K562 (cell line): ENCODE measurements at regions of chr13 and their contacts with region 1.

Region 1: DNA sequence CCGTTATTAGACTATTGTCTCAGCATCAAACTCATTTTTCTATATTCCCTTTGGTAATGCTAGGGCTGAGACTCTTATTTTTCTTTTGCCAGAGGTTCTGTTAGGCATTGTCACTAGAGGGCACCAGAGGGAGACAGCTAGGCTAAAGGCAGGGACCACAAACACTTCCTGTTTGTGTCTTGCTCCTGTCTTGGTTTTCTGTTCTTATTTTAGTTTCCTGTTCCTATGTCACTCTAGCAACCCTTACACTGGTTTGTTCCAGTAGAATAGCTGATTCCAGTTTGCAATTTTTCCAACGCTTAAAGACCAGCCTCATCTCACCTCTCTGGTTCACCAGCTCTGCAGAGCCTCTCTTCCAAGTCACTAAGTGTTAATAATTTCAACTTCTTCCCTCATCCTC is 772.0 kb downstream of the DIAPH3 start:
- DNase-seq: peak; percentile 7 to 64 (median 22)
- ATAC-seq: peak; percentile 83
- H3K4me3 ChIP-seq: no peak overlapping the region
- H3K27ac ChIP-seq: no peak overlapping the region
- H3K4me1 ChIP-seq: no peaks in the 10 kb centered on the region
- H3K27me3 ChIP-seq: no peaks in the 10 kb centered on the region
- CTCF ChIP-seq: peak; percentile 60 to 66 (median 61)
- EP300 ChIP-seq: no peak
- POLR2A ChIP-seq: no peak
- RAD21 ChIP-seq: peak; percentile 68 to 72

Region 2: DNA sequence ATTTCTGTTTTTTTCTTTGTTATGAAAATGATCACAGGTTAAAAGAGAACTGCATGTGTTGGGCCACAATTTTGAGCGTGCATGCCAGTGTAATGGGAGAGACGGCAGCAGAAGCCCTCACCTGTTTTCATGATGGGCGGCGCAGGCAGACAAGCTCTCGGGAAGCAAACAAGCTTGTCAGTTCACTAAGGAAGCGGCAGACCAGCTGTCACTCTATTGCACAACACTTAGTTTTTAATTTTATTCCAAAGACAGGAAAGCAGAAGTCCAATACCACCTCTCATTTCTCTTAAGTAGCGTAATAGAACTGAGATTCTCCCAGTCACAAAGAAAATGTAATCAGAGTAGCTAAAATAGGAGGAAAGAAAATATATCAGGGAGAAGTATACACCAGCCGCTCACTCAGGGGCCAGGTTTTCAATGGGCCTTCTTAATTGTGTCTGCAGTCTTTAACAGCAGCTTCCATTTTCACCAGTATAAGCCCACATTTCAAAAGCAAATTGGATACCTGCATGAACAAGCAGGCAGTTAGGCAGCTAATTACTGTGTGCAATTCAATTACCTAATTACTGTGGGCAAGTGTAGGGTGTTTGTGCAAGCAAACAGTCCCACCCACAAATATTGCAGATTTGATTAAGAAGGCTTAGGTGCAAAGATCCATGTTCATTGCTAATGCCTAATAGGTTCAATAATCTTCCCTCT is 60.6 kb after region 1 on chr13:
- CTCF ChIA-PET with region 1: no interaction called
- POLR2A ChIA-PET with region 1: no interaction called
- in situ Hi-C with region 1: no loop called
- intact Hi-C with region 1: no loop called
- DNase-seq: no peak
- ATAC-seq: no peak
- H3K4me3 ChIP-seq: no peak overlapping the region
- H3K27ac ChIP-seq: no peak overlapping the region
- H3K4me1 ChIP-seq: no peaks in the 10 kb centered on the region
- H3K27me3 ChIP-seq: no peaks in the 10 kb centered on the region; a peak in 2 of 5 replicates
- CTCF ChIP-seq: no peak
- EP300 ChIP-seq: no peak
- POLR2A ChIP-seq: no peak
- RAD21 ChIP-seq: no peak

Region 3: DNA sequence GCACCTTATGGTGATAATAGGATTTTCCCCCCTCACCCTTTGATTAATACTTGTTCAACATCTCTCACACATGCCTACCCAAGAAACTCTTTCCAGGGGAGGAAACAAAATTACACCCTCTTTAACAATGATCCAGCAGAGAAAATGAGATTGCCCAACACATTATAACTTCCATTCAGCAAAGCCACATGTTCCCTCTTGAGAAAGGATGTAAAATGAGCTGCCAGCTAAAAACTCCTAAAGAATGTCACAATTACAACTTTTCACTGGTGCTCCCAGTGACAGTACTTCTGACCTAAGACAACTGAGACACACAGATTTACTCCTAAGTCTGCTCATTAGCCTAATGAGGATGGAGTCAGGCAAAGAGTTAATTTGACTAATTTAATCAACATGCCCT is 150.6 kb after region 1 on chr13:
- CTCF ChIA-PET with region 1: no interaction called
- POLR2A ChIA-PET with region 1: no interaction called
- in situ Hi-C with region 1: no loop called
- intact Hi-C with region 1: loop called (anchors 10 kb)
- DNase-seq: no peak
- ATAC-seq: no peak
- H3K4me3 ChIP-seq: no peak overlapping the region
- H3K27ac ChIP-seq: no peak overlapping the region
- H3K4me1 ChIP-seq: no peaks in the 10 kb centered on the region; a peak in 1 of 5 replicates
- H3K27me3 ChIP-seq: no peaks in the 10 kb centered on the region
- CTCF ChIP-seq: no peak
- EP300 ChIP-seq: no peak
- POLR2A ChIP-seq: no peak
- RAD21 ChIP-seq: no peak

Region 4: GRCh38 chr13:59906413-59907049 is 514.8 kb after region 1 on chr13:
- CTCF ChIA-PET with region 1: no interaction called
- POLR2A ChIA-PET with region 1: no interaction called
- in situ Hi-C with region 1: no loop called
- intact Hi-C with region 1: loop called (anchors 10 kb)
- DNase-seq: peak in 2 of 4 experiments; percentile 2 to 19
- ATAC-seq: 0 out of 3 replicates have a peak, but pooled peaks have one; percentile 57
- H3K4me3 ChIP-seq: no peak overlapping the region
- H3K27ac ChIP-seq: no peak overlapping the region
- H3K4me1 ChIP-seq: no peaks in the 10 kb centered on the region; a peak in 1 of 5 replicates
- H3K27me3 ChIP-seq: no peaks in the 10 kb centered on the region
- CTCF ChIP-seq: peak; percentile 18 to 50 (median 39); a peak in 4 of 6 replicates
- EP300 ChIP-seq: no peak
- POLR2A ChIP-seq: no peak
- RAD21 ChIP-seq: peak; percentile 34 to 35; a peak in 3 of 4 replicates

Region 5: DNA sequence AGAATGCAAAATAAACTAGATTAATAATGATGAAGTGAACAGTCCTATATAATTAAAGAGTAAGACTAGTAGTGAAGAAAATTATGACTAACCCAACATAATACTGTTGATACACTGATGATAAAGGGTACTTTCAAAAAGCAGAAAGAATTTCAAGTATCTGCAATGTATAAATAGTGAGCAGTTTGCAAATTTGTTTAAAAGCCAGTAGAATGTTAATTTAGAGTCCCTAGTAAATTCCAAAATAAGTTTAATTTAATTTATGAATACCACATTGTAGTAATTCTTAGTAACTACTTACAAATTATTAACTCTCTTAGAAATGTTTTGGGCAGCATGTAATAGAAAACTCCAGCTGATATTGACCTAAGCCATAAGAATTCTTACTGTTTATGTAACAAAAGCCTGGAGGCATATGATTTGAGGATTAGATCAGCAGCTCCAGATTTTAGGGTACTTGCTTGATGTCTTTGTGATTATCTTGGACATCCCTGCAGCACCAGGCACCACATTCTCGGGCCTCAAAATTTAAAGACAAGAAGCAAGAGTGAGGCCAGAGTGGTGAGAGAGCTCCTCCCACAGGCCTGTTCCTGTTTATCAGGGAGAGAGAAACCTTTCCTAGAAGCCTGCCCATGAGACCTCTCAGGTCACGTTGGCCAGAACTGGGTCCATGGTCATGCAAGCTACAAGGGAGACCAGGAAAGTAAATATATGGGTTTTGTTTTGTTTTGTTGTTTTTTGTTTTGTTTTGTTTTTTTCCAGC is 937.7 kb after region 1 on chr13:
- CTCF ChIA-PET with region 1: no interaction called
- POLR2A ChIA-PET with region 1: no interaction called
- in situ Hi-C with region 1: loop called (anchors 25 kb)
- intact Hi-C with region 1: no loop called
- DNase-seq: peak; percentile 32 to 70 (median 38)
- ATAC-seq: peak; percentile 96
- H3K4me3 ChIP-seq: no peak overlapping the region
- H3K27ac ChIP-seq: no peak overlapping the region
- H3K4me1 ChIP-seq: no peaks in the 10 kb centered on the region; a peak in 1 of 5 replicates
- H3K27me3 ChIP-seq: no peaks in the 10 kb centered on the region
- CTCF ChIP-seq: peak; percentile 58 to 73 (median 65)
- EP300 ChIP-seq: no peak
- POLR2A ChIP-seq: no peak
- RAD21 ChIP-seq: peak; percentile 65 to 81